ENCODE measurements at regions of chr19 and their contacts with region 1.

Region 1: GRCh38 chr19:44890366-44891015 is 563 bp upstream of the TOMM40 start:
- DNase-seq: peak; percentile 100
- H3K4me3 ChIP-seq: peak overlapping the region; percentile 61
- H3K27ac ChIP-seq: peak overlapping the region; percentile 75
- H3K4me1 ChIP-seq: peaks cover 22% of the 10 kb centered on the region
- H3K27me3 ChIP-seq: no peaks in the 10 kb centered on the region
- CTCF ChIP-seq: no peak

Region 2: DNA sequence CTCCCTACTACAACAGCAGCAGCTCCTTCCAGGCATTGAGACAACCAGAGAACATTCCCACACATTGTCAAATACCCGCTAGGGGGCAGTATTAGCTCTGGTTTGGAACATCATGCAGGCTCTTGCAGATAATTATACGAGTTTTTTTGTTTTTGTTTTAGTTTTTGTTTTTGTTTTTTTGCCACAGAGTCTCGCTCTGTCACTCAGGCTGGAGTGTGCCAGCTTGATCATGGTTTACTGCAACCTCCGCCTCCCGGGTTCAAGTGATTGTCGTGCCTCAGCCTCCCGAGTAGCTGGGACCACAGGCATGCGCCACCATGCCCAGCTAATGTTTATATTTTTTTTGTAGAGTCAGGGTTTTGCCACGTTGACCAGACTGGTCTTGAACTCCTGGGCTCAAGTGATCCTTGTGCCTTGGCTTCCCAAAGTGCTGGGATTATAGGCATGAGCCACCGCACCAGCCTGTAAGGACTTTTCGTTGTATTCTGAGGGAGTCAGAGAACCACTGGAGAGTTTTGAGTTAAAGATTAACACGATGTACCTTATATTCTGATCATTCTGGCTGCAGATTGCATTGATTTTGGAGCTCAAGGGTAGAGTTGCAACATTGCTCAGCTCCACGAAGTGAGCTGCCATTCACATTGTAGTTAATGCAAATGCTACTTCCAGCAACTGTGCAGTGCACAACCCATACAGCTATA is 319.4 kb before region 1 on chr19:
- CTCF ChIA-PET with region 1: no interaction called
- POLR2A ChIA-PET with region 1: no interaction called
- intact Hi-C with region 1: loop called (anchors 1 kb)
- DNase-seq: peak; percentile 67 to 80
- H3K4me3 ChIP-seq: no peak overlapping the region
- H3K27ac ChIP-seq: no peak overlapping the region; the same call in 1 of the 2 replicates
- H3K4me1 ChIP-seq: peaks cover 67% of the 10 kb centered on the region
- H3K27me3 ChIP-seq: no peaks in the 10 kb centered on the region
- CTCF ChIP-seq: peak; percentile 92

Region 3: DNA sequence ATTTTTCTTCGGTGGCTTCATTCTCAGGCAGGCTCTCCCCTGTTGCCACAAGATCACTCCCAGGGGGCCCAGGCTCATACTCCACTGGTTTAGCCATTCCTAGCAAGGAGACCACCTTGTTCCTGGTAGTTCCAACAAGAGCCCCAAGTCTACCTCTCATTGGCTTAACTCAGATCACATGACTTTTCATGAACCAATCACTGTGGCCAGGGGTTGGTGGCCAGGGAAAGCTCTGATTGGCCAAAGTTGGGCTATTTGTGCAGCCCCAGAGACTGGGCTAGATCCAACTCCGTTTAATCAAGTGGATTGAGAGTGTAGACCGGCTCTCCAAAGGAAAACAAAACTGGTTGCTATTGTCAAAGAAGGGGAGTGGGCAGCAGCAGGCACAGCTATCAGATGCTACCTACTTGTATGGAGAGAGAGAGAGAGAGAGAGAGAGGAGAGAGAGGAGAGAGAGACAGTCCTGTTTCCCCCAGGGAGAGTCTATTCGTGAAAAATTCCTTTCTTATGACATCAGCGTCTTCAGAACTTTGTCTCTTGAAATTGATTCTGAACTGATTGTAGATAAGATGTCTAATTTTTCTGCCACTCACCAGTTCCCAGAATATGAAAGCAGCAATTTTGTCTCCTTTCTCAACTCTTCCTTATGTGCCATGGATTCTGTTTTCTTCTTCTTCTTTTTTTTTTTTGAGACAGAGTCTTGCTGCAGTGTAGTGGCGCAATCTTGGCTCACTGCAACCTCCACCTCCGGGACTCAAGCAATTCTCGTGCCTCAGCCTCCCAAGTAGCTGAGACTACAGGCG is 213.3 kb before region 1 on chr19:
- CTCF ChIA-PET with region 1: no interaction called
- POLR2A ChIA-PET with region 1: no interaction called
- intact Hi-C with region 1: loop called (anchors 1 kb)
- DNase-seq: peak; percentile 56 to 90
- H3K4me3 ChIP-seq: peak overlapping the region; percentile 19; the same call in 1 of the 2 replicates
- H3K27ac ChIP-seq: peak overlapping the region; percentile 73
- H3K4me1 ChIP-seq: peaks cover 25% of the 10 kb centered on the region
- H3K27me3 ChIP-seq: no peaks in the 10 kb centered on the region
- CTCF ChIP-seq: peak; percentile 57

Region 4: GRCh38 chr19:44808463-44809371 is 81.8 kb before region 1 on chr19 and contains the start of gene BCAM:
- CTCF ChIA-PET with region 1: no interaction called
- POLR2A ChIA-PET with region 1: interaction called, 3 read pairs
- intact Hi-C with region 1: loop called (anchors 2 kb)
- DNase-seq: peak; percentile 55 to 88
- H3K4me3 ChIP-seq: peak within 1 kb of the TSS; percentile 95
- H3K27ac ChIP-seq: peak within 1 kb of the TSS; percentile 80
- H3K4me1 ChIP-seq: peaks cover 43% of the 10 kb centered on the region
- H3K27me3 ChIP-seq: no peaks in the 10 kb centered on the region
- CTCF ChIP-seq: no peak
- total RNA-seq, gene BCAM: 146 and 199 TPM in 2 replicates

Region 5: DNA sequence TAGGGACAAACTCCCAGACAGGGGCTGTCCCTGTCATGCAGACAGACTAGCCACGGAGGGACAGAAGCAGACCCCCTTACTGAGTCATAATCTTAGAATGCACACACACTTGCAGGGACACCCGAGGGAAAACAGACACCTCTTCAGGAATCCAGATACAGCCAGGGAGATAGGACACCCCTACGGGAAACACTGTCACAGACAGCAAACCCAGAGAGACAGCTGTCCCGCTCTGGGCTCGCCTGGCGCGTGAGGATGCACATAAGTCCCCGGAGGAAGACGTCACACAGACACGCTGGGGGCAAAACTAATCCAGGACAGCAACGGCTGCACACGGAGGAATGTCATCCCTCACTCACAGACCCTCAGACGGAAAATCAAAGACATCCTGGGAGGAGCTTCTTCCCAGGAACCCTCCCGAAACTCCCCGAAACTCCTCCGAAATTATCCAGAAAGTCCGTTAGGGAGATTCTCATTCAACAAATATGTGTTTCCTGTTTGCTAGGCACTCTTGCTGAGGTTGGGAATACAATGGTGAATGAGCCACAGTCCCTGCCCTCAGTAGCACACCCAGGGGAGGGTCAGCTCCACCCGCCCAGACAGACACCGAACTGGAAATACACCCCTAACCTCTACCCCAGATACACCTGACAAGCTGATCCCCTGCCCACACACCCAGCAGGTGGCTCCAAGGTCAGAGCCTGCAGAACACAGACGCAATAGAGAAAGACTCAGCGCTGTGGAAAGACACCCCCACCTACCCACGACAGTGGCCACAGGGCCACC is 14.6 kb before region 1 on chr19:
- CTCF ChIA-PET with region 1: interaction called, 3 read pairs
- POLR2A ChIA-PET with region 1: no interaction called
- intact Hi-C with region 1: loop called (anchors 1 kb)
- DNase-seq: peak; percentile 82 to 95
- H3K4me3 ChIP-seq: peak overlapping the region; percentile 32; the same call in 1 of the 2 replicates
- H3K27ac ChIP-seq: peak overlapping the region; percentile 95
- H3K4me1 ChIP-seq: peaks cover 46% of the 10 kb centered on the region
- H3K27me3 ChIP-seq: no peaks in the 10 kb centered on the region
- CTCF ChIP-seq: no peak

Region 6: GRCh38 chr19:44903602-44904425 is 13.3 kb after region 1 on chr19:
- CTCF ChIA-PET with region 1: no interaction called
- POLR2A ChIA-PET with region 1: interaction called, 18 read pairs
- intact Hi-C with region 1: no loop called
- DNase-seq: peak; percentile 42 to 69
- H3K4me3 ChIP-seq: no peak overlapping the region
- H3K27ac ChIP-seq: no peak overlapping the region
- H3K4me1 ChIP-seq: no peaks in the 10 kb centered on the region; the same call in 1 of the 2 replicates
- H3K27me3 ChIP-seq: no peaks in the 10 kb centered on the region
- CTCF ChIP-seq: peak; percentile 100

Region 7: GRCh38 chr19:45003485-45003884 is 113.0 kb after region 1 on chr19:
- CTCF ChIA-PET with region 1: no interaction called
- POLR2A ChIA-PET with region 1: no interaction called
- intact Hi-C with region 1: loop called (anchors 2 kb)
- DNase-seq: no peak
- H3K4me3 ChIP-seq: no peak overlapping the region
- H3K27ac ChIP-seq: no peak overlapping the region
- H3K4me1 ChIP-seq: peaks cover 7% of the 10 kb centered on the region
- H3K27me3 ChIP-seq: no peaks in the 10 kb centered on the region
- CTCF ChIP-seq: no peak

Measured in PC-9 (cell line).